ENCODE measurements at regions of chr9 and their contacts with region 1.

Region 1: GRCh38 chr9:136122425-136123383 is 4.0 kb upstream of the TMEM250 start:
- DNase-seq: peak; percentile 69 to 86 (median 79)
- H3K4me3 ChIP-seq: peak overlapping the region in 1 of 4 donors; percentile 30
- H3K27ac ChIP-seq: no peak overlapping the region
- H3K4me1 ChIP-seq: peaks cover 9 to 14% of the 10 kb centered on the region in 2 donors
- H3K27me3 ChIP-seq: peaks cover 6% of the 10 kb centered on the region
- CTCF ChIP-seq: peak; percentile 83 to 99 (median 99)
- POLR2A ChIP-seq: no peak

Region 2: GRCh38 chr9:135701959-135702721 is 420.6 kb before region 1 on chr9 and contains the start of gene KCNT1:
- intact Hi-C with region 1: loop called in 1 of 2 experiments (anchors 5 kb)
- DNase-seq: peak; percentile 32 to 68 (median 55)
- H3K4me3 ChIP-seq: no peak within 1 kb of the TSS
- H3K27ac ChIP-seq: no peak within 1 kb of the TSS
- H3K4me1 ChIP-seq: peaks cover 0 to 8% of the 10 kb centered on the region in 2 donors
- H3K27me3 ChIP-seq: peaks cover 24% of the 10 kb centered on the region
- CTCF ChIP-seq: peak; percentile 39 to 88 (median 67)
- POLR2A ChIP-seq: no peak
- total RNA-seq, gene KCNT1: 0.11 to 2.4 (median 0.28) TPM in 3 of 9 donors, not detected in the others

Region 3: GRCh38 chr9:135772702-135773493 is 349.8 kb before region 1 on chr9:
- intact Hi-C with region 1: no loop called
- DNase-seq: no peak
- H3K4me3 ChIP-seq: no peak overlapping the region
- H3K27ac ChIP-seq: no peak overlapping the region
- H3K4me1 ChIP-seq: no peaks in the 10 kb centered on the region
- H3K27me3 ChIP-seq: no peaks in the 10 kb centered on the region
- CTCF ChIP-seq: no peak
- POLR2A ChIP-seq: no peak

Region 4: GRCh38 chr9:135797507-135798262 is 325.0 kb before region 1 on chr9:
- intact Hi-C with region 1: loop called in 1 of 2 experiments (anchors 10 kb)
- DNase-seq: peak; percentile 40 to 71 (median 59)
- H3K4me3 ChIP-seq: no peak overlapping the region
- H3K27ac ChIP-seq: no peak overlapping the region
- H3K4me1 ChIP-seq: no peaks in the 10 kb centered on the region
- H3K27me3 ChIP-seq: no peaks in the 10 kb centered on the region
- CTCF ChIP-seq: peak; percentile 44 to 69 (median 60)
- POLR2A ChIP-seq: no peak

Region 5: DNA sequence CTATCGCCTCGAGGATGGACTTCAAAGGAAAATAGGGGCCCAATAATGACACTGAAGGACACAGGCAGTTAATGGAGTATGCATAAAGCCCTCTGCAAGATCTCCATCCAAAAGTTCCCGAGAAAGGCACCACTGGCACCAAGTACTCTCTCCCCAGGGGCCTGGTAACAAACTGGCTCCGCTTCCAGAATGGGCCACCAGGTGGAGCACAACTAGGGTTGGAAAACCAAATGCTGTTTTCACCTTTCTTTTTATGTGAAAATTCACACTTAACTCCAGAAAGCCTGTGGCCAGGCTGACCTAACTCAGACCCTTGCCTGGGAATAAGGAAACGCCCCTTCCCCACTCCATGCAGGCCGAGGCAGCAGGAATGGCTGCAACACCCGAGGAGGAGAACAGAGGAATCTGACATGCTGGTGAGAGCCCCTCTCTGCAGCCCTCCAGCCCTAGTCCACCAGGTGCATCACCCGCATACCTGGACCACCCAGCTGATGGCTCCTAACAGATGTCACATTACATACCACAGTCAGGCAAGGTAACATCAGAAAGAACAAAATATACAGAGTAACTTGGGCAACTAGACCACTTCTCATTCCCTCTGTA is 258.2 kb before region 1 on chr9:
- intact Hi-C with region 1: loop called (anchors 5 to 10 kb)
- DNase-seq: peak; percentile 58 to 88 (median 73)
- H3K4me3 ChIP-seq: no peak overlapping the region
- H3K27ac ChIP-seq: no peak overlapping the region
- H3K4me1 ChIP-seq: no peaks in the 10 kb centered on the region
- H3K27me3 ChIP-seq: no peaks in the 10 kb centered on the region
- CTCF ChIP-seq: peak; percentile 70 to 89 (median 78)
- POLR2A ChIP-seq: no peak

Region 6: DNA sequence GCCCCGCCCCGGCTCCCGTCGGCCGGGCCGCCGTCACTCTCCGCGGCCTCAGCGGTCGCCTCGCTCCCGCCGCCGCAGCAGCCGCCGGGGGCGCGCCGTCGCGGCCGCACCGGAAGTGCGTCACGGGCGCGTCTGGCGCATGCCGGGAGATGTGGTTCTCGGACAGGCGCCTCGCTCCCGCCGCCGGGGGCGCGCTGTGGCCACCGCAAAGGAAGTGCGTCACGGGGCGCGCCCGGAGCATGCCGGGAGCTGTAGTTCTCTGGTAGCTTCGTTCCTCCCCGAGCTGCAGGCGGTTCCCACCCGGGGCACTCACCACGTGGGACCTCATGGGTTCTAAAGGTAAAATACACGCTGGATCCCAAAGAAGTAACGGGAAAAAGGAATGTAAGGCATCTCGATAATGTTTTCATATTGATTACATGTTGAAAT is 161.4 kb before region 1 on chr9 and contains the start of gene UBAC1:
- intact Hi-C with region 1: loop called (anchors 2 kb)
- DNase-seq: peak; percentile 94 to 98 (median 96)
- H3K4me3 ChIP-seq: peak within 1 kb of the TSS; percentile 34 to 99 (median 62)
- H3K27ac ChIP-seq: peak within 1 kb of the TSS; percentile 40 to 95 (median 76)
- H3K4me1 ChIP-seq: peaks cover 6 to 13% of the 10 kb centered on the region in 2 donors
- H3K27me3 ChIP-seq: no peaks in the 10 kb centered on the region
- CTCF ChIP-seq: peak in 5 of 6 experiments; percentile 21 to 63 (median 47)
- POLR2A ChIP-seq: no peak
- total RNA-seq, gene UBAC1: 25.5 to 51.8 (median 37.4) TPM

Region 7: DNA sequence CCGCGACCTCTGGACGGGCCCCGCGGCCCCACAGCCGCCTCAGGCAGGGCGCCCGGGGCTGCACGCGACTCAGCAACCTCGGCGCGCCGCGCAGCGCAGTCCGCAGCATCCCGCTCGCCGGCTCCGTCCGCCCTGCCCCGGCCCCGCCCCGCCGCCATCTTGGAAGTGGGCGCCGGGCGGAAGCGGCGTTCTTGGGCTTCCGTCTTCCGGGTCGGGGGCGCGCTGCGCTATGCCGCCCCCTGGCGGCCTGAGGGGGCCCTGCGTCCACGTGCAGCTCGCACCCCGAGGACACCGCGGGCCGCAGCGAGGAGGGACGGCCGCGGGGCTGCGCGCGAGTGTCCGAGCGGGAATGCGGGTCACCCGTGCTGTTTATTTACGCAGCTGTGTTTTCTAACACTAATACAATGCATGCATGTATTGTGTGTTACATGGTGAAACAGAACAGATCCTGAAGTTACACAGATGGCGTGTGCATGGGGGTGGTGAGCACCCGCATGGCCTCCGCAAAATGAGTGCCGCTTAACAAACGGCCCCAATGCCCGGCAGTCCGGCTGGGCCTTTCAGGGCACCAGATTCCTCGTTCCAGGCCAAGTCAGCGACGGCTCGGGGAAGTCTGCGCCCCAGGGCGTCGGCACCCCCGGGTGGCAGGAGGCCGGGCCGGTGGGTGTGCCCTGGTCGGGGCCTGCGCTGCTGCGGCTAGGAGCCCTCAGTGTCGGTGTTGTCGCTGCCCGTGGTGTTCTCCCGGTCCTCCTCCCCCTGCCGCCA is 241.1 kb after region 1 on chr9 and contains the start of gene DNLZ:
- intact Hi-C with region 1: no loop called
- DNase-seq: peak; percentile 75 to 88 (median 87)
- H3K4me3 ChIP-seq: peak within 1 kb of the TSS in 3 of 4 donors; percentile 45 to 73 (median 62)
- H3K27ac ChIP-seq: peak within 1 kb of the TSS; percentile 67 to 93 (median 75)
- H3K4me1 ChIP-seq: peaks cover 0 to 8% of the 10 kb centered on the region in 2 donors
- H3K27me3 ChIP-seq: no peaks in the 10 kb centered on the region
- CTCF ChIP-seq: peak; percentile 55 to 100 (median 91)
- POLR2A ChIP-seq: peak in 1 of 2 donors; percentile 25
- total RNA-seq, gene DNLZ: 12.1 to 28.9 (median 17.6) TPM